ENCODE measurements at regions of chr1 and their contacts with region 1.

Region 1: DNA sequence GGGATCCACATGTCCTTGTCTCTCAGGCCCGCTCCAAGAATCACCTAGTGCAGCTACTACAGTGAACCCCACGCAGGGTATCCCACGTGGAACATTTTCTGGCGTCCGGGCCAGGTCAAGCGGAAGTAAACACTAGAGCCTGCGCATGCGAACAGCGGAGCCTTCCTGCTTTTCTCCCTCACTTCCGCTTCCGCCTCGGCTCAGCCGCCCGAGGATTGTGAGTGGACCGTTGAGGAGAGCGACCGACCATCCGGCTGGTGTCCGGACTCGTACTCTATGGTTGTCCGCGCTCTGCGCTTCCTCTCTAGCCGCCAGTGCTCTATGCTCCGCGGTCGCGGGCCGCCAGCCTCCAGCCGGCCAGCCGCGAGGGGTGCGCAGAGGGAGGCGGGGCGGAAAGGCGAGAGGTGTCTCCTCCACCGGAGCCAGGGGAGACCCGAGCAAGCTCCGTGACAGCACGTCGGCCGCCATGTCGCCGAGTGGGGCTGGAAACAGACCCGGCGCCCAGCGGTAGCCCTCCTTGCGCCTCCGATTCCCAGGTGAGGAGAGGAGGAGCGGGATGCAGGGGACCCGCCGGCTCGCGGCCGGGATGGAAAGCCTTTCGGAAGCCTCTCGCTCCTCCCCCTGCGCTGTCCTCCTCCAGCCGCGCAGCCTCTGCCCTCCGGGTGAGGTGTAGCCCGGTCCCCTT is at the starts of genes CNST and TFB2M:
- DNase-seq: peak; percentile 96
- ATAC-seq: peak; percentile 84
- H3K4me3 Mint-ChIP-seq: peak within 1 kb of the TSS; percentile 83
- H3K27ac Mint-ChIP-seq: peak within 1 kb of the TSS; percentile 94
- H3K4me1 Mint-ChIP-seq: peaks cover 42% of the 10 kb centered on the region
- H3K27me3 Mint-ChIP-seq: no peaks in the 10 kb centered on the region
- total RNA-seq, gene CNST: 23.6 to 24.2 TPM
- total RNA-seq, gene TFB2M: 14.1 to 17.3 TPM

Region 2: DNA sequence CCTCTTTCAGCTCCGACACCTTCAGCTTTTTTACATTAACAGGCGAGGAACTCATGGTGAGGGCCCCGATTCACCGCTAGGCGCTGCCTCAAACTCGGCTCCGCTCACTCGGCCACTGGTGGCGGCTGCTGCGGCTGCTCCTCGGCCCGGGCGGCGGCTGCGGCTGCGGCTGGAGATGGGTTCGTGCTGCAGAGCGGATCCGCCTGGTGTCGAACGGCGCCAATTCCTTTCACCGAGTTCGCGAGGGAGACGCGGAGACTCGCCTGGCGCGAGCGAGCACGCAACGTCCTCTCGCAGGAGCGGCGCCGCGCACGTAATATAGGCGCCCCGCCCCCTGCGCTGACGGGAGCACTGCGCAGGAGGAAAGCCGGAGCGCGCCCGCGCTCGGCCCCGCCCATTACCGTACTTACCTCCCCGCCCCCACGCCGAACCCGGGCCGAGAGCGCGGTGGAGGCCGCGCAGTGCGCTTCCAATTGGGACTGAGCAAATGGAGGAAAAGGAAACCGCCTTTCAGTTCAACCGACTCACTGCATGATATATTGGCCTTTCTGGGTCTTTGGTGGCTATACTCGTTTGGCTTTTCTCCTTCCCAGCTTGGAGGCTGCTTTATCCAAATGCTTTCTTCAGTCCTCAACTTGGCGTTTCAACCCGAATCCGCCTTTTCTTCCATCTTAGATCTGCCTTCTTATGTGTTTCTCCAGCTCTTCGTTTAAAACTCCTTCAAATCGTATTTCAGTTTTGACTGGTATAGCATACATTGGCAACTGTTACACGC is 1701.8 kb before region 1 on chr1 and contains the start of gene HNRNPU:
- CTCF ChIA-PET with region 1: no interaction called
- POLR2A ChIA-PET with region 1: no interaction called
- intact Hi-C with region 1: loop called in 1 of 2 experiments (anchors 2 kb)
- DNase-seq: peak; percentile 98
- ATAC-seq: peak; percentile 72
- H3K4me3 Mint-ChIP-seq: peak within 1 kb of the TSS; percentile 100
- H3K27ac Mint-ChIP-seq: peak within 1 kb of the TSS; percentile 99
- H3K4me1 Mint-ChIP-seq: peaks cover 33% of the 10 kb centered on the region
- H3K27me3 Mint-ChIP-seq: no peaks in the 10 kb centered on the region
- total RNA-seq, gene HNRNPU: 521 to 532 TPM

Region 3: DNA sequence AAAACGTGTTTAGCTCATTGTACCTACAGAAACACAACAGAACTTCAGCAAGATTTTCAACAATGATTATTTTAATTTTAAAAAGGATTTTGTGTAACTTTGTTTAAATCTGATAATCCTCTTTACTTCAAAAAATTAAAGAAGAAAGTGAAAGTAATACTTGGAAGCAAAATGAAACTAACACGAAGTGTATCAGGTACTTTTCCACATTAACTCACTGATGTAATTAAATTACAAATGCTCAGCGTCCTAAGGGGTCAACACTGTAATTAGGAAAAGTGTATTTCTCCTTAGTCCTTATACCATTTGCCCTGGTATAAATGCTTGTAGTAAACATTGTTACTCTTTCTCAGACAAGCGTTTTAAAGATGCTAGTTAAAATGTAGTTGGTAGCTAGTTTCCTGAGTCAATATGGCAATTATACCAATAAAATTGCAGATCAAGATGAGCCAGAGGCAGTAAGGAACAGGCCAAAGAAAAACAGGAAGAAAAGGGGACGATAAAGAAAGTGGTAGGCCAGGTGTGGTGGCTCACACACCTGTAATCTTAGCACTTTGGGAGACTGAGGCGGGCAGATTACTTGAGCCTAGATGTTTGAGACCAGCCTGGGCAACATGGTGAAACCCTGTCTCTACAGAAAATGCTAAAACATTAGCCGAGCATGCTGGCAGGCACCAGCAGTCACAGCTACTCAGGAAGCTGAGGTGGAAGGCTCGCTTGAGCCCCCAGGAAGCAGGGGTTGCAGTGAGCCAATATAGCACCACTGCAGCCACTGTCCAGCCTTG is 612.2 kb before region 1 on chr1:
- CTCF ChIA-PET with region 1: no interaction called
- POLR2A ChIA-PET with region 1: no interaction called
- intact Hi-C with region 1: loop called in 1 of 2 experiments (anchors 10 kb)
- DNase-seq: no peak
- ATAC-seq: peak; percentile 43
- H3K4me3 Mint-ChIP-seq: peak overlapping the region; percentile 54
- H3K27ac Mint-ChIP-seq: peak overlapping the region; percentile 88
- H3K4me1 Mint-ChIP-seq: peaks cover 25% of the 10 kb centered on the region
- H3K27me3 Mint-ChIP-seq: no peaks in the 10 kb centered on the region

Region 4: GRCh38 chr1:246587606-246588005 is 21.3 kb after region 1 on chr1:
- CTCF ChIA-PET with region 1: interaction called, 4 read pairs
- POLR2A ChIA-PET with region 1: no interaction called
- intact Hi-C with region 1: loop called in 1 of 2 experiments (anchors 2 kb)
- DNase-seq: no peak
- ATAC-seq: peak; percentile 41
- H3K4me3 Mint-ChIP-seq: no peak overlapping the region
- H3K27ac Mint-ChIP-seq: peak overlapping the region; percentile 42
- H3K4me1 Mint-ChIP-seq: peaks cover 61% of the 10 kb centered on the region
- H3K27me3 Mint-ChIP-seq: no peaks in the 10 kb centered on the region

Region 5: DNA sequence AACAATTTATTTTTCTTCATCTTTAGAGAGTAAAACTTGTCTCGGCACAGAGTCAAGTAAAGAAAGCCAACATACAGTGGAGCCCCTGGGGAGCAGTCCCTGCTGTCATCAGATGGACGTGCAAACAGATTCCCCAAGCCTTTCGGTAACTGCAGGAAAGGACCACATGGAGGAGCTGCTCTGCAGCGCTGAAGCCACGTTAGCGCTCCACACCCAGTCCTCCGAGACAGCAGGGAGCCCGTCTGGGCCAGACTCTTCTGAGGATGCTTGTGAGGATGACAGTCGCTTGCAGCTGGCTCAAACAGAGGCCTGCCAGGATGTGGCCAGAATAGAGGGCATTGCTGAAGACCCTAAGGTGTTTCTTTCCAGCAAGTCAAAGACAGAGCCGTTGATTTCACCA is 80.8 kb after region 1 on chr1:
- CTCF ChIA-PET with region 1: interaction called, 4 read pairs
- POLR2A ChIA-PET with region 1: no interaction called
- intact Hi-C with region 1: loop called (anchors 5 to 10 kb)
- DNase-seq: no peak
- ATAC-seq: no peak
- H3K4me3 Mint-ChIP-seq: no peak overlapping the region
- H3K27ac Mint-ChIP-seq: no peak overlapping the region
- H3K4me1 Mint-ChIP-seq: peaks cover 2% of the 10 kb centered on the region
- H3K27me3 Mint-ChIP-seq: no peaks in the 10 kb centered on the region

Region 6: GRCh38 chr1:246724016-246724730 is 157.9 kb after region 1 on chr1 and contains the start of gene SCCPDH:
- CTCF ChIA-PET with region 1: no interaction called
- POLR2A ChIA-PET with region 1: no interaction called
- intact Hi-C with region 1: no loop called
- DNase-seq: peak; percentile 84
- ATAC-seq: peak; percentile 96
- H3K4me3 Mint-ChIP-seq: peak within 1 kb of the TSS; percentile 83
- H3K27ac Mint-ChIP-seq: peak within 1 kb of the TSS; percentile 84
- H3K4me1 Mint-ChIP-seq: peaks cover 8% of the 10 kb centered on the region
- H3K27me3 Mint-ChIP-seq: no peaks in the 10 kb centered on the region
- total RNA-seq, gene SCCPDH: 17.1 to 28.6 TPM

Region 7: DNA sequence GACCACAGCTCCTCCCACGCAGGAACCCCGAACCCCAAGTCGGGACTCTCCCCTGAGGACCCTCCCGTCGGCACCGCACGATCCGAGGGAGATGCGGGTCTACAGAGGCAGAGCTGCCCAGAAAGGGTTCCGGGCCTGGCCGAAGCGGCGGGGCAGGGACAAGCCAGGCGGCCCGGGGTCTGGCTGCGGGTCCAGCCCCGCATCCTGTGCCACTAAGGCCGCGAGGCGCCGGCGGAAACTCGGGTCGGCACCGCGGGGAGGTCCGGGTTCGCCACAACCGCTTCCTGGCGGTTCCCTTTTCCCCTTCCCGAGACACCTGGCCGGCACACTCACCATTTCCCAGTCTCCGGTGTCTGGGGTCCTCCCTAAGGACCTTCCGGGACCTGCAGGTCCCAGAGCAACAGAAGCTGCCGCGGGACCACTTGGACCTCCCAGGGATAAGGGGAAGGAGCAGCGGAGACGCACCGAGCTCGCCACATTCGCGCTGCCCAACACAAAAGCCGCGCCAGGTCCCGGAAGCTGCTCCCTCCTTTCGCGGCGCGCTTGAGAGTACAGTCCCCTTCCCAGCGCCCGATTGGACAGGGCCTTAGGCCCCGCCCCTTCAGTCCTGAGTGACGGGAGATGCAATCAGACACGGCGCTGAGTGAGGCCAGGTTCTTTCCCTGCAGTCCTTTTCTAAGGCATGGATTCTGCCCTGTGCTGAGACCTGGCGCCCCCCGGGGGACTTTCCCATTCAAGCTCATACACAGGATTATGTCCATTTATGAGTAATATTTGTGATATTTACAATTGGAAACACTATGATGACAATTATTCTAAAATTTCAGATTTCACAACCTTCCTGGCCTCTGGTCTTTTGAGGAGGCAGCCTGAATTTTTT is 512.2 kb after region 1 on chr1 and contains the start of gene ZNF670:
- CTCF ChIA-PET with region 1: no interaction called
- POLR2A ChIA-PET with region 1: no interaction called
- intact Hi-C with region 1: loop called in 1 of 2 experiments (anchors 1 kb)
- DNase-seq: peak; percentile 97
- ATAC-seq: peak; percentile 100
- H3K4me3 Mint-ChIP-seq: peak within 1 kb of the TSS; percentile 89
- H3K27ac Mint-ChIP-seq: peak within 1 kb of the TSS; percentile 91
- H3K4me1 Mint-ChIP-seq: peaks cover 27% of the 10 kb centered on the region
- H3K27me3 Mint-ChIP-seq: peaks cover 5% of the 10 kb centered on the region
- total RNA-seq, gene ZNF670: 4.3 to 4.9 TPM

Region 8: DNA sequence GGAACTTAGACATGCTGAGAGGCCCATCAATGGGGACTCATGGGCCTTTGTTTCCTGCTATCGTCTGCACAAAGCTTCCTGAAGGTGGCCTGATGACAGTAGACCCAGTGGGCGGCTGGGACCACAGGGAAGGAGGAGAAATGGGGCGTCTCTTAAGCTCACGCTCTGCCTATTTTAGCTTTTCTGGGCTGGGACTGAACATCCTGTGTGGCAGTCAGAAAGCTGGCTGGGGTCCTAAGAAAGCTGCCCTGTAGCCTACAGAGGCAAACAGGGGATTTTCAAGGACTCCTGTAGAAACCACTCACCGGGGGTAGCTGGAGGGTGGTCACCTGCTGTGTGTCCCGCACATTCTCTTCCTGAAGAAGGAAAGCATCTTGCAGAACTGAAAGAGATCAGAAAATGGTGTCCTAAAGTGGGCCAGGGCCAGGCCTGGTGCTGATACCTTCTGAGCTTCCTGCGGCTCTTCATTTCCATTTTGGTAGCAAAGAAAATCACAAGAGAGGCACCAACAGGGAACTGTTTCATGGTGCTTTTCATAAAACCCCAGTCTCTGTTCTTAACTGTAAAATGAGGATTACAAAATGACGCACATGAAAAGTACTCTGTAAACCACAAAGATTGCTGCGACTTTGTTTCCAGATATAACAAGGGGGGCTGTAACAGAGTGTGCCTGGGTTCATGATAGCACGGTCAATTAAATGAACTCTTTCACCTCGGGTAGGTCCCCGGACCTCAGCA is 756.7 kb after region 1 on chr1:
- CTCF ChIA-PET with region 1: no interaction called
- POLR2A ChIA-PET with region 1: no interaction called
- intact Hi-C with region 1: loop called in 1 of 2 experiments (anchors 5 kb)
- DNase-seq: peak; percentile 72
- ATAC-seq: peak; percentile 72
- H3K4me3 Mint-ChIP-seq: peak overlapping the region; percentile 60
- H3K27ac Mint-ChIP-seq: peak overlapping the region; percentile 85
- H3K4me1 Mint-ChIP-seq: peaks cover 41% of the 10 kb centered on the region
- H3K27me3 Mint-ChIP-seq: no peaks in the 10 kb centered on the region